Sigmoid colon (tissue), 7 donors: ENCODE measurements at regions of chr17 and their contacts with region 1.

Region 1: DNA sequence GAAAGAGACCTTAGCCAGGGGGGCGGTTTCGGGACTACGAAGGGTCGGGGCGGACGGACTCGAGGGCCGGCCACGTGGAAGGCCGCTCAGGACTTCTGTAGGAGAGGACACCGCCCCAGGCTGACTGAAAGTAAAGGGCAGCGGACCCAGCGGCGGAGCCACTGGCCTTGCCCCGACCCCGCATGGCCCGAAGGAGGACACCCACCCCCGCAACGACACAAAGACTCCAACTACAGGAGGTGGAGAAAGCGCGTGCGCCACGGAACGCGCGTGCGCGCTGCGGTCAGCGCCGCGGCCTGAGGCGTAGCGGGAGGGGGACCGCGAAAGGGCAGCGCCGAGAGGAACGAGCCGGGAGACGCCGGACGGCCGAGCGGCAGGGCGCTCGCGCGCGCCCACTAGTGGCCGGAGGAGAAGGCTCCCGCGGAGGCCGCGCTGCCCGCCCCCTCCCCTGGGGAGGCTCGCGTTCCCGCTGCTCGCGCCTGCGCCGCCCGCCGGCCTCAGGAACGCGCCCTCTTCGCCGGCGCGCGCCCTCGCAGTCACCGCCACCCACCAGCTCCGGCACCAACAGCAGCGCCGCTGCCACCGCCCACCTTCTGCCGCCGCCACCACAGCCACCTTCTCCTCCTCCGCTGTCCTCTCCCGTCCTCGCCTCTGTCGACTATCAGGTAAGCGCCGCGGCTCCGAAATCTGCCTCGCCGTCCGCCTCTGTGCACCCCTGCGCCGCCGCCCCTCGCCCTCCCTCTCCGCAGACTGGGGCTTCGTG is at the start of gene MAPT:
- DNase-seq: peak; percentile 95
- H3K4me3 ChIP-seq: peak within 1 kb of the TSS; percentile 64 to 97 (median 82)
- H3K27ac ChIP-seq: peak within 1 kb of the TSS; percentile 62 to 77 (median 74)
- H3K4me1 ChIP-seq: peaks cover 0 to 36% (median 29%) of the 10 kb centered on the region in 4 donors
- H3K27me3 ChIP-seq: peaks cover 14 to 37% (median 27%) of the 10 kb centered on the region in 3 donors
- CTCF ChIP-seq: peak in 3 of 4 experiments; percentile 36 to 95 (median 39)
- EP300 ChIP-seq: no peak
- POLR2A ChIP-seq: no peak
- total RNA-seq, gene MAPT: 7.1 to 20.5 (median 15.2) TPM

Region 2: GRCh38 chr17:45936610-45937009 is 42.4 kb after region 1 on chr17:
- intact Hi-C with region 1: no loop called
- DNase-seq: no peak
- H3K4me3 ChIP-seq: no peak overlapping the region
- H3K27ac ChIP-seq: no peak overlapping the region
- H3K4me1 ChIP-seq: peaks cover 0 to 18% (median 15%) of the 10 kb centered on the region in 4 donors
- H3K27me3 ChIP-seq: no peaks in the 10 kb centered on the region
- CTCF ChIP-seq: no peak
- EP300 ChIP-seq: no peak
- POLR2A ChIP-seq: no peak

Region 3: GRCh38 chr17:45948881-45949624 is 54.9 kb after region 1 on chr17:
- intact Hi-C with region 1: loop called (anchors 1 kb)
- DNase-seq: peak; percentile 86
- H3K4me3 ChIP-seq: peak overlapping the region in 3 of 4 donors; percentile 18 to 27 (median 21)
- H3K27ac ChIP-seq: peak overlapping the region in 3 of 4 donors; percentile 28 to 67 (median 42)
- H3K4me1 ChIP-seq: peaks cover 0 to 20% (median 13%) of the 10 kb centered on the region in 4 donors
- H3K27me3 ChIP-seq: no peaks in the 10 kb centered on the region
- CTCF ChIP-seq: peak; percentile 53 to 88 (median 76)
- EP300 ChIP-seq: no peak
- POLR2A ChIP-seq: no peak